Activated naive CD4-positive, alpha-beta T cell treated with anti-CD3 and anti-CD28 coated beads for 36 hours (primary cell): ENCODE measurements at regions of chr21 and their contacts with region 1.

Region 1: GRCh38 chr21:33542640-33543504 is at the start of gene SON:
- DNase-seq: peak; percentile 99
- H3K4me3 Mint-ChIP-seq: peak within 1 kb of the TSS; percentile 90
- H3K27ac Mint-ChIP-seq: peak within 1 kb of the TSS; percentile 99
- H3K4me1 Mint-ChIP-seq: peaks cover 34% of the 10 kb centered on the region
- H3K27me3 Mint-ChIP-seq: no peaks in the 10 kb centered on the region
- total RNA-seq, gene SON: 269 to 273 TPM

Region 2: DNA sequence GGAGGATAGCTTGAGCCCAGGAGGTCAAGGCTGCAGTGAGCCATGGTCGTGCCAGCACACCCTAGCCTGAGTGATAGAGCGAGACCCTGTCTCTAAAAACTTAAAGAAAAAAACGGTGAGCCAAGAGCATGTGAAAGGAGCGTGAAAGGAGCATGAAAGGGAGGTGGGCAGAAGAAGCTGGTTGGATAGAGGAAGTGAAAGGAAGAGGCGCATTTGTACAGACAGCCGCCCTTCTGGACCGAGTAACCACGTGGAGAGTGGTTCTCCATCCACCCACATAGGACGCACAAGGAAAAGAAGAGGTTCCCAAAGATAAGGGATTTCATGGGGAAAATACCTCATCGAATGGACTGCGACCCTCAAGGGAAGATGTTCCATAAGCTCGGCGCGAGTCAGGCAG is 373.5 kb before region 1 on chr21:
- CTCF ChIA-PET with region 1: no interaction called
- intact Hi-C with region 1: no loop called
- DNase-seq: no peak
- H3K4me3 Mint-ChIP-seq: no peak overlapping the region
- H3K27ac Mint-ChIP-seq: no peak overlapping the region
- H3K4me1 Mint-ChIP-seq: no peaks in the 10 kb centered on the region
- H3K27me3 Mint-ChIP-seq: no peaks in the 10 kb centered on the region

Region 3: GRCh38 chr21:33229784-33230544 is 312.9 kb before region 1 on chr21 and contains the start of gene IFNAR2:
- CTCF ChIA-PET with region 1: no interaction called
- intact Hi-C with region 1: loop called (anchors 2 kb)
- DNase-seq: peak; percentile 73
- H3K4me3 Mint-ChIP-seq: peak within 1 kb of the TSS; percentile 89
- H3K27ac Mint-ChIP-seq: peak within 1 kb of the TSS; percentile 92
- H3K4me1 Mint-ChIP-seq: peaks cover 52% of the 10 kb centered on the region
- H3K27me3 Mint-ChIP-seq: no peaks in the 10 kb centered on the region
- total RNA-seq, gene IFNAR2: 16.6 to 19.4 TPM

Region 4: DNA sequence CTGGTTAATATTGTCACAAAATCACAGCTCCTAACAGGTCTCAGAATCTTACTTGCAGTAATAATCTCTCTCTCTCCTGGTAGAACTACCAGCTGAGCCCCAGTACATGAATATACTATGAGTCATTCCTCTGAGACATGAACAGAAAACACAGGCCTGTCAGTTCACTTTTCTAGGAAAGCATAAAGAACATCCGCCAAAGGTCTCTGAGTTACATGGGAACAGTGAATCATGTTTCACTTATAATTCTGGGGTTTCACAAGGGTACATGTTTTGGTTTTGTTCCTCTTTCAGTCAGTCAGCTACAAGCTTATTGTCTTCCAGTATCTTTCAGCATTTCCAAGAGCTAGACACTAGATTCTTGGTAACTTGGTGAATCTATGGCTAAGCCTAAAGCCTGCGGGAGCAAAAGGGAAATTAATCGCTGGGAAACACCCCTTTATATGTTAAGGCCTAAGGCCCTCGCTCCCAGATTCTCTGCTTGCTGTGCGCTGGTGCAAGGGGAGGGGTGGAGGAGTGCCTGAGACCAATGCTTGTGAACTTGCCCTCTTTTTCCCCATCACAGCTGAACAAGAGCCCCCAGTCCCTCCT is 108.0 kb before region 1 on chr21:
- CTCF ChIA-PET with region 1: no interaction called
- intact Hi-C with region 1: loop called (anchors 1 kb)
- DNase-seq: peak; percentile 43
- H3K4me3 Mint-ChIP-seq: peak overlapping the region; percentile 25
- H3K27ac Mint-ChIP-seq: peak overlapping the region; percentile 76
- H3K4me1 Mint-ChIP-seq: peaks cover 29% of the 10 kb centered on the region
- H3K27me3 Mint-ChIP-seq: no peaks in the 10 kb centered on the region

Region 5: DNA sequence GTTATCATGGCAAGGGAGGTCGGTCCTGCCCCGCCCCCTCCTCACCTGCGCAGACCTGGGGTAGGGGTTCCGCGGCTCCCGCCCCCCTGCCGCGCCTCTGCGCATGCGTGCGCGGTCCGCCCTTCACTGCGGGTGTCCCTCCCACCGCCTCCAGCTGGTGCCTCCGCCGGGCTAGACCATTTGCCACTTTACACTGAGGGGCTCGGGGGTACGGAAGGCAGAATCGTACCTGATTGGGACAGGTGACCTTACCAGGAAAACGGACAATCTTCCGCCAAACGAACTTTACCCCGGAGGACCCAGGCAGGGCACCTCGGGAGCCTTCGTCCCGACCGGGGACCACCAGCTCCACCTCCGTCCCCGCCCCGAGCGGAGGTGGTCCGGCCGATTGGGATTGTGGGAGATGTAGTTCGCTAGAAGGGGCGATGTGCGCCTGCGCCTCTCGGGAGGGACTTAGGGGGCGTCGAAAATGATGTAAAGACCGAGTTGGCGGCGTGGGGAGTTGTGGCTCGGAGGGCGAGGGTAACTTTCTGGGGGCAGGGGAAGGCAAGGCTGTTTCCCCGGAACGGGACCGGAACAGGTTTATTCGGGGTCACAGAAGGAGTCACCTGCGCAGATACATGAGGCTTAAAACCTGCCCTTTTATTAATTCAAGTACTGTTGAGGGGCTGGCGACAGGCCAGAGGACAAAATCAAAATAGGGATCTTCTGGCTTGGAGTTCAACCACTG is 51.3 kb before region 1 on chr21 and contains the start of gene DNAJC28:
- CTCF ChIA-PET with region 1: interaction called, 3 read pairs
- intact Hi-C with region 1: loop called (anchors 1 kb)
- DNase-seq: peak; percentile 92
- H3K4me3 Mint-ChIP-seq: peak within 1 kb of the TSS; percentile 99
- H3K27ac Mint-ChIP-seq: peak within 1 kb of the TSS; percentile 91
- H3K4me1 Mint-ChIP-seq: peaks cover 6% of the 10 kb centered on the region
- H3K27me3 Mint-ChIP-seq: no peaks in the 10 kb centered on the region
- total RNA-seq, gene DNAJC28: 0.17 TPM

Region 6: DNA sequence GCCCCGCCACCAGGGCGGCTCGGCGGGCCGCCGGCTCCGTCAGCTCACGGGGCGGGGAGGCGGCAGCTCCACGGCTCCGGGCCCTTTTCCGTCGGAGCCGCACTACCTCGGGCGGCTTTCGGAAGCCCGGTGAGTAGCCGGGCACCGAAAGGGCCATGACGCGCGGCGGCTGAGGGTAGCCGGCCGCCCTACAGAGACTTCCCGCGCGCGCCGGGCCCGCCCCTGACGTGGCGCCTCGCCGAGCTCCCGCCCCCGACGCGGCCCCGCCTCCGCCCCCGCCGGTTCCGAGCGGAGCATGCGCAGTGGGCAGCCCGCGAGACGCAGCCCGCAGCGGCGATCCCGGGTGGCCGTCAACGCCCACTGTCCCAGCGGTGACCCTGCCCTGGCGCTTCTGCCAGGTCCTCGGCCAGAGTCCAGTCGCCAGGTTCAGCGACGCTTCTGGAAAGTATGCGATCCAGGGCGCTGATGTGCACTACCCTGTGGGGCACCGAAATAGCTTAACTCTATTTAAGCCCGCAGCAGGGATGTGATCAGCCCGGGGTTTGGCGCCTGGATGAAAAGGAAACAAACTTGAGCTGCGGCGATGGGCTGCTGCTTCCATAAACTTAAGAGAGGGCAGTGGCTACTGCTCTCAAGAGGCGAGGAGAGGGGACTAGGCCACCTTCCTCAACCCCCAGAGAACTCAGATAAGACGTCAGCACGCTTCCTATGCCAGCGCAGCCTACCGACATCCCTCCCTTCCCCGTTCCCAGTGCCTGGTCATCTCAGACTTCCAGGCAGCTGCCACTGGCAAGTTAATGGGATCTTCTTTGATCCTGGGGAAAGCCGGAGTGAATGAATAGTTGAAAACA is 45.8 kb after region 1 on chr21 and contains the start of gene DONSON:
- CTCF ChIA-PET with region 1: interaction called, 3 read pairs
- intact Hi-C with region 1: loop called (anchors 1 kb)
- DNase-seq: peak; percentile 82
- H3K4me3 Mint-ChIP-seq: peak within 1 kb of the TSS; percentile 91
- H3K27ac Mint-ChIP-seq: peak within 1 kb of the TSS; percentile 77
- H3K4me1 Mint-ChIP-seq: peaks cover 15% of the 10 kb centered on the region
- H3K27me3 Mint-ChIP-seq: no peaks in the 10 kb centered on the region
- total RNA-seq, gene DONSON: 35.6 to 42.4 TPM

Region 7: DNA sequence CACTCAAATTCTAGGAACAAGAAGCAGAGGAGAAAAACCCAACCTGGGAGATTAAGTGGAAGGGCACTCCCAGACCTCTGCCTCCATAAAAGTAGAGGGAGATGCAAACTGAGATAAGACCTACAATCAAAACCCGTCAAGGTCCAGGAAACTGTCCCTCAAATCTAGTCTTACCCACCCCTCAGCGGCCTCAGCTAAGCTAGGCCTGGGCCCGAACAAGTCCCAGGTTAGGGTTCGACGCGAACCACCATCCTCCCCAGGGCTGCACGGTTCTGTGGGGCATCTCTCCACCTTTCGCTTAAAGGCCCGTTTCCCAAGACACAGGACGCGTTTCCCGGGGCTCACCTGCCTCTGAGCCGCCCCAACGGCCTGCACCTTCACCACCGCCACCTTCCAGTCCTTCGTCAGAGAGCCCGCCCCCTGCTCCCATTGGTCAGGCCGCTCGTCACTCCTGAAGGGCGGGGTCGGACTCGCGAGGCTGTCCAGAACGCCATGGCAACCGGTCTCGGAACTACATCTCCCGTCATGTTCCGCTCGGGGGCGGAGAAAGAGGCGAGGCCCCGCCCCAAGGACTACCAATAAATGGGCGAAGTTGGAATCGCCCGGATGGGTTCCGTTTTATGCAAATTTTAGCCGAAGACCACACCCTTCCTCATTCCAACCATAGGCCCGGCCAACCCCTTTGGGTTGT is 98.6 kb after region 1 on chr21 and contains the start of gene CRYZL1:
- CTCF ChIA-PET with region 1: no interaction called
- intact Hi-C with region 1: loop called (anchors 1 kb)
- DNase-seq: peak; percentile 100
- H3K4me3 Mint-ChIP-seq: peak within 1 kb of the TSS; percentile 91
- H3K27ac Mint-ChIP-seq: peak within 1 kb of the TSS; percentile 94
- H3K4me1 Mint-ChIP-seq: peaks cover 21% of the 10 kb centered on the region
- H3K27me3 Mint-ChIP-seq: peaks cover 17% of the 10 kb centered on the region
- total RNA-seq, gene CRYZL1: 30.3 to 32.7 TPM

Region 8: GRCh38 chr21:33976082-33977016 is 433.5 kb after region 1 on chr21:
- CTCF ChIA-PET with region 1: no interaction called
- intact Hi-C with region 1: loop called (anchors 5 kb)
- DNase-seq: peak; percentile 83
- H3K4me3 Mint-ChIP-seq: peak overlapping the region; percentile 70
- H3K27ac Mint-ChIP-seq: peak overlapping the region; percentile 99
- H3K4me1 Mint-ChIP-seq: peaks cover 52% of the 10 kb centered on the region
- H3K27me3 Mint-ChIP-seq: no peaks in the 10 kb centered on the region